ENCODE measurements at regions of chr10 and their contacts with region 1.

Region 1: DNA sequence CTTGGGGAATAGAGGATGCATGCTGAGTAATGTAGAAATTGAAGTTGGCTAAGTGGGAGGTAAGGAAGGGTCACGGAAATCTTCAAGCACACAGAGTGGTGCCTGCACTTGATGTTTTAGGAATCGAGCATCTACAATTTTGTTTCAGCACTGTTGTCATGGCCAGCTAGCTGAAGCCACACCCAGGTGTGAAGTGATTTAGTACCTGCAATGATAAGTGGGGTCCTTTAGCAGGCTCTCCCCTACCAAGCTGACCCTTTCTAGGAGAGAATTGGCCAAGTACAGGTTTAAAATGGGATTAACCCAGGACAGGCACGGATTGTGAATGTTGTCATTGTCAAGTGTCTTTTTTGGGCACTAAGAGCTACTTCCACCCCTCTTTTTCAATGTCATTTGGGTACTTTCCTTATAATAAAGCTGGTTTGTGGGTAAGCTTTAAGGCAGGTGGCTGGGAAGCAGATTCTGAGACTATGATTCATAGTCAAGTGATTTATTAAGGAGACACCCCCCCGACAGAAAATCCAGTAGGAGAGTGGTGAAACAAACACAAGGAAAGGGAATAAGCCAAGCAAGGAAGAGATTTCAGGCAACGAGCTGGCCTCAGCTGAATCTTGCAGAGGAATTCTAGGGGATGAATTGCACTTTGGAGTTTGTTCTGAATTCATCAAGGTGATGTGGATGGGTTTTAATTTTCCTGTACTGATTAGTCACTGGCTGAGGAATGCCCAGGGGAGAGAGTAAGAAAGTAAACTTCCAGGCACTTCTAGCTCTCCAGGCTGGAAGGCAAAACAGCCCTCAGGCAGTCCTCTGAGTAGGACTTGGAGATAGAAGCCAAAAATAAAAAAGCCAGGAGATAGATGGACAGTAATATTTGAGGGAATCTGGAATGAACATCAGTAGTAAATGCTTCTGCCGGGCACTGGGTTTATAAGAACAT is 1128.4 kb downstream of the SORCS3 start:
- DNase-seq: no peak
- ATAC-seq: no peak
- H3K4me3 ChIP-seq: no peak overlapping the region
- H3K27ac ChIP-seq: no peak overlapping the region
- H3K4me1 ChIP-seq: no peaks in the 10 kb centered on the region
- H3K27me3 ChIP-seq: no peaks in the 10 kb centered on the region
- CTCF ChIP-seq: no peak

Region 2: DNA sequence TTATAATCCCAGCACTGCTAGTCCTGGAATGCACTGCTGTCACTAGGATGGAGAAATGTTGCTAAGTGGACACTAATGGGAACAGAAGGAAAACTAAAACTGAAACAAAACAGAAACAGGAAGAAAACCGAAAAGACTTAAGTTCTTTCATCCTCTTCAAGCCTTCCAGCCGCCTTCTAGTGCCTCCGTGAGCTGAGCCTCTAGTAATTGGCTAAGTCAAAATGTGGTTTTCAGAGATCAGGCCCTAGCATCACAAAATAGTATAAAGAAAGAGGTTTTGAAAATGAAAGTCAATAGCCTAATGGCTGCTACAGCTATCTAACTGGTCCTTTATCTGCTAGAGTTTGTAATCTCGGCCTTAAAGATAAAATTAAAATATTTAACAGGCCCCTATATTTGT is 1648.9 kb after region 1 on chr10:
- intact Hi-C with region 1: loop called in 1 of 2 experiments (anchors 5 kb)
- DNase-seq: no peak
- ATAC-seq: no peak
- H3K4me3 ChIP-seq: no peak overlapping the region
- H3K27ac ChIP-seq: no peak overlapping the region
- H3K4me1 ChIP-seq: no peaks in the 10 kb centered on the region
- H3K27me3 ChIP-seq: no peaks in the 10 kb centered on the region
- CTCF ChIP-seq: no peak

Measured in psoas muscle (tissue), 8 donors.